ENCODE measurements at regions of chr2 and their contacts with region 1.

Region 1: DNA sequence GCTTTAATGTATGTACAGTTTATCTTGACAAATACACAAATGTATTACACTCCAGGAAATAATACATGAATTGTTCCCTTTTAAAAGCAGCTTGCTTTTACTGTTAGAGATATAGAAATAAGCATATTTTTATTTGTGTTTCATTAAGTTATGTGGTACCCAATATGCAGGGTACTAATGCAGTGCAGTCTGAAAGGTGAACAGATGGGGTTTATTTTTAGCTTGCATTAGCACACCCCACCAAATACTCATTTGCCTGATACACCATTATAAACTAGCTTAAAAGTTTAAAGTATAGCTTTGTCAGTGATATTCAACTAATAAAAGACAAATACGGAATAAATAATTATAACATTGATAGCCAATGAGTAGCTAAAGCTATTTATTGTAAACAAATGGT is 394.7 kb upstream of the ZNF804A start:
- DNase-seq: peak in 1 of 4 experiments; percentile 11
- ATAC-seq: peak; percentile 67
- H3K4me3 ChIP-seq: peak overlapping the region; percentile 45
- H3K27ac ChIP-seq: peak overlapping the region; percentile 80; the same call in 2 of the 3 replicates
- H3K4me1 ChIP-seq: no peaks in the 10 kb centered on the region
- H3K27me3 ChIP-seq: no peaks in the 10 kb centered on the region
- CTCF ChIP-seq: no peak
- EP300 ChIP-seq: no peak
- POLR2A ChIP-seq: no peak
- RAD21 ChIP-seq: no peak

Region 2: DNA sequence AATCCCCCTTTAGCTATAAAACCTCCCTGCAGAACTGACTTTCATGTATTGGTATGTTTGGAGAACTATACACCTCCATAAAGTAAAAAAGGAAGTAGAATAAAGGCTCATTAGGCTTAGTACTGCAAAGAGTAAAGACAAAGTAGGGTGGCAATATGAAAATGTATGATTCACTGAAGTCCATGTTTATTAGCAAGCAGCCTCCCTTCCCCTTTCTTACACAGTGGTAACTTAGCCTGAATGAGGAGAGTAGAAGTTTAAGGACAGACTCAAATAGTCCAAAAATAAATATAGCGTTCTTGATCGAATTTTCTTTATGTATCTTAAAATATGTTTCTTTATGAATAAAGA is 396.2 kb after region 1 on chr2:
- CTCF ChIA-PET with region 1: no interaction called
- POLR2A ChIA-PET with region 1: no interaction called
- in situ Hi-C with region 1: no loop called
- intact Hi-C with region 1: loop called (anchors 10 kb)
- DNase-seq: no peak
- ATAC-seq: peak; percentile 61
- H3K4me3 ChIP-seq: peak overlapping the region; percentile 36
- H3K27ac ChIP-seq: no peak overlapping the region; the same call in 2 of the 3 replicates
- H3K4me1 ChIP-seq: peaks cover 0 to 8% of the 10 kb centered on the region in 2 experiments; a peak in 1 of 5 replicates
- H3K27me3 ChIP-seq: no peaks in the 10 kb centered on the region
- CTCF ChIP-seq: no peak
- EP300 ChIP-seq: no peak
- POLR2A ChIP-seq: no peak
- RAD21 ChIP-seq: no peak